Dorsolateral prefrontal cortex (tissue), 120 donors: ENCODE measurements at regions of chr3 and their contacts with region 1.

Region 1: DNA sequence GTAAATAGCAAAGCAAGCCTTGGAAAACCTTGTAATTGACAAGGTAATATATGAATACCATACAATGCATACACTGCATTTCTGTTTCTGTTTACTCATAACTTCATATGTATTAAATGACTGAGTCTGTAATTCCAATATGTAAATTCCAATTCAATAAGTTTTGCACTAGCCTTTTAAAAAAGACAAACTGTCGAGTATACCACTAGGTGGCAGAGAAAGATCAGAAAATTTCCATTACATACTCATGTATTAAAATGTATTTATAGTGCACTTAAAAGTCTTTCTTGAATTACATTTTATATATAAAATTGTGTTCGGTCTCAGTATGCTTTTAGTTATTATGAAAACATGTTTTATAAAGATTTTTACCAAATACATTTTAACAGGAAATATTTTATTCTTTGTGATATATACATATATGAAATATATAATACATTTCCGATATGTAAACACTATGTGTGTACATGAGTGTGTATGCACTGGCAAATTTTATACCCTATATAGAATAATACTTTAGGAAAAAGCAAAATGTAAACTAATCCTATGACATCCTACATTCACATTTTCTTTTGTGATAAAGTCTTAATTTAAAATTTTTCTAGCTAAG is 216.8 kb downstream of the VGLL3 start:
- DNase-seq: no peak
- H3K4me3 ChIP-seq: no peak overlapping the region
- H3K27ac ChIP-seq: no peak overlapping the region
- H3K27me3 ChIP-seq: peaks cover 0 to 9% (median 0%) of the 10 kb centered on the region in 45 donors
- CTCF ChIP-seq: peak; percentile 52 to 91 (median 74)

Region 2: DNA sequence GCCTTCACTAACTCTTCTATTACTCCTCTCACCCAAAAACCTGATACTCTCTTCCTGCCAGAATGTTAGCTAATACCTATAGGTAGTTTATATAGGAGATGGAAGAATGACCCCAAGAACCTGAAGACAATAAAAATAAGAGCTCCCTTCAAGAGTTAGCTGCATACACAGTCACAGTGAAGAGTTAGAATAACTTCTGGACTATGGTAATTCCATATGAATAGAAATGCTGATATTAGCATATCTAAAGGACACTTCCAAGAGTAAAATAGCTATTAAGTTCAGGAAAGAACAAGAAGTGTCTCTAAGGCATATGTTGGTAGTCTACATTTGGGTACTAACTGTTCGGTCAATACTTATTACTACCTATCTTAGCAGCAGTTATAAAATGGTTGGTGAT is 82.5 kb after region 1 on chr3:
- intact Hi-C with region 1: no loop called
- DNase-seq: no peak
- H3K4me3 ChIP-seq: no peak overlapping the region
- H3K27ac ChIP-seq: no peak overlapping the region
- H3K27me3 ChIP-seq: no peaks in the 10 kb centered on the region
- CTCF ChIP-seq: no peak

Region 3: GRCh38 chr3:87088993-87089841 is 315.0 kb after region 1 on chr3:
- intact Hi-C with region 1: loop called in 1 of 2 experiments (anchors 2 kb)
- DNase-seq: peak; percentile 7 to 87 (median 72)
- H3K4me3 ChIP-seq: peak overlapping the region; percentile 51 to 90 (median 77)
- H3K27ac ChIP-seq: peak overlapping the region; percentile 77 to 99 (median 94)
- H3K27me3 ChIP-seq: no peaks in the 10 kb centered on the region
- CTCF ChIP-seq: peak in 13 of 56 donors; percentile 3 to 40 (median 13)